HEK293T (cell line): ENCODE measurements at regions of chr1 and their contacts with region 1.

Region 1: DNA sequence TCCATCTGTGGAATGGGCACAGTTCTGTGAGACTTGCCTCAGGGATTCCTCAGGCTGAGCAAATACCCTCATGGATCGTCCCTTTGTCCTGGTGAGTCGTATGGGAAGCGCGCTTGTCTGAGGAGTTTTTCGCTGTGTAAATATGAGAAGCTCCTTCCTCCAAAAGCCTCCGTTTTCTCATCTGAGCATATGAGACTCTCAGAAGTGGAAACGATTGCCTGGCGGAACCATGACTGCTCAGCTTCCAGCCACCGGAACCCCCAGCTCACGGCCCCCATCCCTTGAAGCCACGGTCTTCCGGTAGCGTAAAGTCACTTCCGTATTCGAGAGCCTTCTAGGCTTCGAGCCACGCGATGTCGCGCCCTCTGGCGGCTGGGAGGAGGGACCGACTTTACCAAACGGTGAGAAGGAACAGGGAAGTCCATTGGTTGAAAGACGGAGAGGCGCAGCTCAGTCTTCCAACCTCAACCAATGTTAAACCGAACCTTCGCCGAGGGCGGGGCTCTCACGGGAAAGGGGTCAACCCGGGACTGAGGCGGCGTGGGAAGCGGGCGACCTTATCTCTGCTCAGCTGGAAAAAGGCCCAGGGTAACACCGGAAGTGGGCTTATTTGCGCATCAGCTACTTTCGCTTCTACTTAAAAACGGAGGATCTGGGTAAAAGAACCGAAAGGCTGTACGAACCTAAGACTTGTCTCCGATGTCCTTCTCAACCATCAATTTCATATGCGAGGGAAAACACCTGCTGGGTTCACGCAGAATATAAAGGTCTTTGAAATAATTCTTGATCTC is 46.2 kb downstream of the AZIN2 start:
- DNase-seq: peak; percentile 100

Region 2: GRCh38 chr1:33072707-33073106 is 54.5 kb before region 1 on chr1:
- CTCF ChIA-PET with region 1: no interaction called
- POLR2A ChIA-PET with region 1: no interaction called
- DNase-seq: no peak

Region 3: GRCh38 chr1:33111970-33112369 is 15.2 kb before region 1 on chr1:
- CTCF ChIA-PET with region 1: interaction called, 10 read pairs
- POLR2A ChIA-PET with region 1: interaction called, 13 read pairs
- DNase-seq: no peak

Region 4: DNA sequence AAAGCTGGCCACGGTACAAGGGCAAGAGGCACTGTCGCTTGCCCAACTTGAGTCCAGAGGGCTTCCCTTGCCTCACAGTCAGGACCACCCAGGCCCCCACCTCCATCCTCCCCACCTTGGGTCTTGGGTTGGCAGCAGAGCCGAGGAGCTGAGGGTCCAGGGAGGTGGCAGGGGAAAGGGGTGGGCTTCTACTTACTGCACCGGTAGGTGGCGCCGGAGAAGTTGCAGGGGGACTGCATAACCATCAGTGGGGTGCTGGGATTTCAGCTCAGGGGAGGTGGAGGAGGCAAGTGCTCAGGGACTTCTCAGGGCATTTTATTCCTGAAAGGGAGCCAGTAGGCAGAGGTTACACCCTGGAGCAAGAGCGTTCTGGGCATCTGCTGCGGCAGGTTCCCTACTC is 10.6 kb after region 1 on chr1:
- CTCF ChIA-PET with region 1: interaction called, 15 read pairs
- POLR2A ChIA-PET with region 1: interaction called, 27 read pairs
- DNase-seq: peak; percentile 67

Region 5: DNA sequence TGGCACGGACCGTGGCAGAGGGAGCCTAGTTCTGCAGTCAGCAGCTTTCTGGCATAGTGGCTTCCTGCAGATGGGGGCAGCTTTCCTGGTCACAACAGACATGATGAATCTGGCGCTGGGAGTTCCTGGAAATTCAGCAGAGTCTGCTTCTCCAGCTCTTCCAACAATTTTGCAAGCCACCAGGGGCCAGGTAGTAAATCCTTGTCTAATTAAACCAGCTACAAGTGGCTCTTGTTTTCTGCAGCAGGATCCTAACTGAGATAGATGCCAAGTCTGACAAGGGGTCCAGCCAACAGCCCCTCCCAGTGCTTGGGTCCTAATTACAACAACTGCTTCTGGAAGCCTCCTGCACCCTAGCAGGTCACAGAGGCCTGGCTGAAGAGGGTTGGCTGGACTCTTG is 18.8 kb after region 1 on chr1:
- CTCF ChIA-PET with region 1: interaction called, 4 read pairs
- POLR2A ChIA-PET with region 1: interaction called, 27 read pairs
- DNase-seq: no peak

Region 6: DNA sequence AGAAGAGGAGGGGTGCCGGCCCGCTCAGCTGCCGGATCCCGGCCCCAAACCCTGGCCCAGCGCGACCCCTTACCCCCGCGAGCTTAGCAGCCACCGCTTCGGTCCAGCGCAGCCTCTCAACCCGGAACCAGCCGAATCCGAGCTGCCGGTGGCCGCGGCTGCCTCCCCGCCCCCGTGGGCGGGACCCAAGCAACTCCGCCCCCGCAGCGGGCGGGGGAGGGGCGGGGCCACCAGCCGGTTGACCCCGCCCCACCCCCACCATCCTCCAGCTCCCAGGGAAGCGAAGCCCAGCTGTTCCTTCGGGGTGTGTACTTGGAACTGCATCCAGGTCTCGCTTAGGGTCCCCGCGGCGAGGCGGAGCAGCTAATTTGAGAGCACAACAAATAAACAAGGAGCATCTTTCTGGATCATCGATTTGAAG is 54.7 kb after region 1 on chr1 and contains the start of gene TRIM62:
- CTCF ChIA-PET with region 1: interaction called, 5 read pairs
- POLR2A ChIA-PET with region 1: interaction called, 21 read pairs
- DNase-seq: peak; percentile 99